ENCODE measurements at regions of chr7 and their contacts with region 1.

Region 1: DNA sequence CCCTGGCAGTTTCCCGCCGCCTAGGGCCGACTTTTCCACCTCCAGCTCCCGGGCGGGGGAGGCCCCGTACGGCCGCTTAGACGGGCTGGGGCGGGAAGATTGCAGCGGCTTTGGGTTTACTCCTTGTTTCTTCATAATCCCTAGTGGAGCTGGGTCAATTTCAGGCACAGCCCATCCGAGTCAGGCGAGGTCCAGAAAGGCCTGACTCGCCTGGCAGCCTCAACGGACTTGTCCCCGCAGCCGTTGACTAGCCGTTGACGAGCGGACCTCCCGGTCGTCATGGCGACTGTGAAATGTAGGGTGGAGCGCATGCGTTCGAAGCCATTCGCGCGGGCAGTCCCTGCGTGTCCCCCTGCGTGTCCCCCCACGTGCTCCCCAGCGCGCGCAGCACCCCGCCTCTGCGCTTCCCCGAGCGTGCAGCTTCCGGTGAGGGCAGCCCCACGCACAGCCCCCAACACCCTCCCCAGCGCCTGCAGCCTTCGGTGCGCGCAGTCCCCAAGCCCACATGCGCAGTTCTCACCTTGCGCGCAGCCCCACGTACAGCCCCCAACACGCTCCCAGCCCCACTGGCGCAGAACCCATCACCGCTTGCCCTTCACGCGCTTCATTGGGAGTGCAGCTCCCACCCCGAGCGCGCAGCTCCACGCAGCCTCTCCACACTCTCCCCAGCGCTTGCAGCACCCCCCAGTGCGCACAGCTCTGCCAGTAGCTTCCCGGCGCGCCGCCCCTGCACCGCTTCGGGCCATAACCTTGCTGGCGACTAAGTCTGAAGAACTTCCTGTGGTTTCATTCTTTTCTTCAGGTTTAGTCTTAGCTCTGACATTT is 67.8 kb downstream of the TBX20 start:
- DNase-seq: peak in 2 of 4 experiments; percentile 2 to 5
- ATAC-seq: peak; percentile 63; the same call in 1 of the 3 replicates
- H3K4me3 ChIP-seq: no peak overlapping the region
- H3K27ac ChIP-seq: no peak overlapping the region
- H3K4me1 ChIP-seq: peaks cover 0 to 8% of the 10 kb centered on the region in 2 experiments; a peak in 2 of 5 replicates
- H3K27me3 ChIP-seq: peaks cover 0 to 5% of the 10 kb centered on the region in 2 experiments; a peak in 1 of 5 replicates
- CTCF ChIP-seq: no peak
- EP300 ChIP-seq: no peak
- POLR2A ChIP-seq: no peak
- RAD21 ChIP-seq: no peak

Region 2: DNA sequence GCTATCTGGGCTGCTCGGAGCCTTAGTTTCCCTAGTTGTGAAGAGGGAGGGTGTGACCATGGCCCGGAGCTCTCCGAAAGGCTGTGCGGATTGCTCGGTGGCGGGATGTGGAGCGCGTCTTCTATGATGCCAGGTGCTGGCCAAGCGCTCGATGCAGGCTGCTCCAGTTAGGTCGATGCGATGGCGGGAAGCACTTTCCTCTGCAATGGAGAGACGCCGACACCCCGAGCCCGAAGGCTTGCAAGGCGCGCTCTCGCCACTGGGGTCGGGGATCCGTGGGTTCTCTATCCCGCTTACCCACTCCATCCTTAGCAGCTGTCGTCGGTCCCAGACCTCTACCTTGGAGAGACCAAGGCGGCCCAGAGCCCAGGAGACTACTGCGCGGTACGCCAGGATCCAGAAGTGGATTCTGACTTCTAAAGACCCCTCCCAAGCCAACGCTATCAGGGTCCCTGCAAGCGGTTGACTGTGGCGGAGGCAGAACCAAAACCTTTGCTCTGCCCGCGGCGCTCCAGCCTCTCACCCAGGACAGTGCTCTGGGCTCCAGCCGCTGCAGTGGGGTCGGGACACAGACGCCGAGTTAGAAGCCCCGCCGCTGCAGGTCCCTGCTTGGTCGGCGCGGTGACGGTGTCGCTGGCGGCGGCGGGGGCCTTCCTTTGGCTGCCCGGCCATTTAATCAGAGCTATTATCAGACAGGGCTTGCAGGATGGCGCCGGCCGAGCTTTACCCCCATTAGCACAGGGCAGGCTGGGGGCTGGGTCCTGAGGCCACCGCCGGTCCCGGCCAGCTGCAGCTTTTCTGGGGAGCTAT is 75.6 kb after region 1 on chr7:
- CTCF ChIA-PET with region 1: no interaction called
- POLR2A ChIA-PET with region 1: no interaction called
- in situ Hi-C with region 1: no loop called
- intact Hi-C with region 1: no loop called
- DNase-seq: no peak
- ATAC-seq: no peak
- H3K4me3 ChIP-seq: no peak overlapping the region
- H3K27ac ChIP-seq: no peak overlapping the region
- H3K4me1 ChIP-seq: peaks cover 0 to 7% of the 10 kb centered on the region in 2 experiments; a peak in 2 of 5 replicates
- H3K27me3 ChIP-seq: peaks cover 23 to 61% of the 10 kb centered on the region in 2 experiments
- CTCF ChIP-seq: no peak
- EP300 ChIP-seq: no peak
- POLR2A ChIP-seq: no peak
- RAD21 ChIP-seq: no peak

Region 3: DNA sequence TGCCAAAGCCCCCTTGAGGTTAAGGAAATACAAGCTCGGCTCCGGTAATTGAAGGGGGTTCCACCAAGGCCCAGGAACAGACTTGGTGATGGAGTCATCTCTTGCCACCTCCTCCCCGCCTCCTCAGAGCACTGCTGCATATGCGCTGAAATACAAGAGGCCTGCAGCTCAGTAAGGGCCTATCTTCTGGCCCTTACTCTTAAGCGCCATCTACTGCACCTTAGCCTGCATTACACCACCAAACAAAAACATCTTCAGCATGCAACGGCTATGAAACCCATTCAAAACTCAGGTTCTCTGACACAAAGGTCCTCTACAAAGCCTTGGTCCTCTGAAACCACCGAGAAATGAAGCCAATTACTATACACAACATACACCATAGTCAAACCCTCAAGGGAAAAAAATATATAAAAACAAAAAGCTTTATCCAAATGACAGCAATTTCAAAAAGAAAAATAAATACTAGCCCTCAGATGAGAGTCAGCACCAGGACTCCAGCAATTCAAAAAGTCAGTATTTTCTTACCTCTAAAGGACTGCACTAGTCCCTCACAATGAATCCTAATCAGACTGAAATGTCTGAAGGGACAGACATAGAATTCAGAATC is 244.5 kb after region 1 on chr7:
- CTCF ChIA-PET with region 1: no interaction called
- POLR2A ChIA-PET with region 1: no interaction called
- in situ Hi-C with region 1: no loop called
- intact Hi-C with region 1: loop called (anchors 10 kb)
- DNase-seq: peak; percentile 49 to 57 (median 53)
- ATAC-seq: peak; percentile 90
- H3K4me3 ChIP-seq: no peak overlapping the region
- H3K27ac ChIP-seq: no peak overlapping the region
- H3K4me1 ChIP-seq: no peaks in the 10 kb centered on the region
- H3K27me3 ChIP-seq: no peaks in the 10 kb centered on the region
- CTCF ChIP-seq: peak; percentile 74 to 80 (median 76)
- EP300 ChIP-seq: no peak
- POLR2A ChIP-seq: no peak
- RAD21 ChIP-seq: peak; percentile 41 to 65

Region 4: GRCh38 chr7:35537067-35538023 is 351.2 kb after region 1 on chr7:
- CTCF ChIA-PET with region 1: no interaction called
- POLR2A ChIA-PET with region 1: no interaction called
- in situ Hi-C with region 1: no loop called
- intact Hi-C with region 1: loop called (anchors 5 kb)
- DNase-seq: peak; percentile 82 to 86 (median 84)
- ATAC-seq: peak; percentile 100
- H3K4me3 ChIP-seq: 0 out of 2 replicates have a peak overlapping the region, but pooled peaks have one; percentile 18
- H3K27ac ChIP-seq: no peak overlapping the region
- H3K4me1 ChIP-seq: peaks cover 0 to 5% of the 10 kb centered on the region in 2 experiments; a peak in 1 of 5 replicates
- H3K27me3 ChIP-seq: peaks cover 9 to 21% of the 10 kb centered on the region in 2 experiments; a peak in 4 of 5 replicates
- CTCF ChIP-seq: peak; percentile 90 to 93 (median 91)
- EP300 ChIP-seq: no peak
- POLR2A ChIP-seq: no peak
- RAD21 ChIP-seq: peak; percentile 89 to 91

Region 5: DNA sequence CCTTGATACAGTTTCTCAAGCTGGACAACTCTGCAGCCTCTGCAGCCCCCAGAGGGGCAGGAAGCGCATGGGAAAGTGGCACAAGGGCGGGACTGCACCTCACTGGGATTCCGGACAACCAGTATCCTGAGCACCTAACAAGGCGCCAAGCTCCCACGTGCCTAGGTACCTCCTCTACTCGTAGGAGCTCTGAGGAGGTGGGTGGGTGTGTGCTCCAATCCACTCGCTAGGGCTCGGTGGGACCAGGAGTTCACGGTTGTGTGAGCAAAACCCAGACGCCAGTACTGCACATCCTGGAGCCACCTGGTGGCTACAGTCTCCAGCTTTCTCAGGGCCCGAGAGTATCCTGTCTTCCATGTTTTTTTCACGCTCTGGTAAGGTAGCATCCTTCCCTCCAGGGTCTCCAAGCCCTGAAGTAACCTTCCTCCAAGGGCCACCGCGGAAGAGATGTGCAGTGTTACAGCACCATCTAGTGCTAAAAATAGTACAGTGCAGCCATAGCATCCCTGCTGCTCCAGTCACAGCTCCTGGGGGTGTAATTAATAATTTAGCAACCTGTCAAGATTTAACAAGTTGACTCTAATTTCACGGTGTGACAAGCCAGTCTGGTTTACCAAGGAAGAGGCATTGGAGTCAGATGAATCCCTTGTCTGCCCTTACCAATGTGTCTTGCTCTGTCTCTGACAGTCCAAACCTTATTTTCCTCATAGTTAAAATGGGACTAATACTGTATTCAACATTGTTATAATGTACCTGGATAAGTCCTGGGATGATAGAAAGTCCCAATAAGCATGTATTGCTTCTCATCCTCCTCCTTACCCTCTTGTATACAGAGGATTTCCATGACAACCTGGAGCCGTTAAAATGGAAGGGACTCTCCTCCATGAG is 438.4 kb after region 1 on chr7:
- CTCF ChIA-PET with region 1: no interaction called
- POLR2A ChIA-PET with region 1: no interaction called
- in situ Hi-C with region 1: no loop called
- intact Hi-C with region 1: loop called (anchors 10 kb)
- DNase-seq: peak; percentile 65 to 72 (median 70)
- ATAC-seq: peak; percentile 97
- H3K4me3 ChIP-seq: no peak overlapping the region
- H3K27ac ChIP-seq: no peak overlapping the region
- H3K4me1 ChIP-seq: no peaks in the 10 kb centered on the region
- H3K27me3 ChIP-seq: peaks cover 2 to 8% of the 10 kb centered on the region in 2 experiments; a peak in 2 of 5 replicates
- CTCF ChIP-seq: peak; percentile 81 to 89 (median 88)
- EP300 ChIP-seq: no peak
- POLR2A ChIP-seq: no peak
- RAD21 ChIP-seq: peak; percentile 78 to 84